Left cardiac atrium (tissue), 4 donors: ENCODE measurements at regions of chr1 and their contacts with region 1.

Region 1: DNA sequence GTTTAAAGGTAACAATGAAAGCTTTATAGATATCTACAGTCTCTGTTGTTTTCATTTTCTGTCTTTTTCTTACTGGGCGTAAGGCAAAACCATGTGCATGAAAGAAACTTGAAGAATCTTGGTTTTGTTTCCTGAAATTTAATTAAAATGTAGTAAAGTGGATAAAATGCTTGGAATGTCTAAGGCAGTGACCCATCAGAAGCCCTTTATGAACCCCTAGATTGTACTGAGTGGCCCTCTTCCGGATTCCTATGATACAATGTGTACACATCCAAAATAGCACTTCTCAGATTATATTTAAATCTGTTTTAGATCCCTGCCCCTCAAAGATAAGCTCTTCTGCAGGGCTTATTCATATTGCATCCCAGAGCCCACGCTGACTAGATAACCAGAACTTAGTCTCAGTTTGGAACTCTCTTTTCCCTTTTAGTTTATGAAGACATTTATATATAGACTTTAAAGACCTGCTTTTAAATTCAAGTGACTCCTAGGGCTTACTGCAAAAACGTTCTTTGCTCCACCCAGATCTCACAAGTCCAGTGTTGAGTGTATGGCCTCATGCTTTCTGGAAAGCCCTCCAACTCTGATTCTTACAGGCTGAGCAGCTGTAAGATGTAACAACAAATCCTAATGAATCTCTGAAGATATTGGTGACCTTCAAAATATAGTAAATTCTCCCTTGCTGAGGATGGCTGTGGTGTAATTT is 142.9 kb downstream of the LRRC7 start:
- DNase-seq: no peak
- ATAC-seq: peak; percentile 60 to 76

Region 2: DNA sequence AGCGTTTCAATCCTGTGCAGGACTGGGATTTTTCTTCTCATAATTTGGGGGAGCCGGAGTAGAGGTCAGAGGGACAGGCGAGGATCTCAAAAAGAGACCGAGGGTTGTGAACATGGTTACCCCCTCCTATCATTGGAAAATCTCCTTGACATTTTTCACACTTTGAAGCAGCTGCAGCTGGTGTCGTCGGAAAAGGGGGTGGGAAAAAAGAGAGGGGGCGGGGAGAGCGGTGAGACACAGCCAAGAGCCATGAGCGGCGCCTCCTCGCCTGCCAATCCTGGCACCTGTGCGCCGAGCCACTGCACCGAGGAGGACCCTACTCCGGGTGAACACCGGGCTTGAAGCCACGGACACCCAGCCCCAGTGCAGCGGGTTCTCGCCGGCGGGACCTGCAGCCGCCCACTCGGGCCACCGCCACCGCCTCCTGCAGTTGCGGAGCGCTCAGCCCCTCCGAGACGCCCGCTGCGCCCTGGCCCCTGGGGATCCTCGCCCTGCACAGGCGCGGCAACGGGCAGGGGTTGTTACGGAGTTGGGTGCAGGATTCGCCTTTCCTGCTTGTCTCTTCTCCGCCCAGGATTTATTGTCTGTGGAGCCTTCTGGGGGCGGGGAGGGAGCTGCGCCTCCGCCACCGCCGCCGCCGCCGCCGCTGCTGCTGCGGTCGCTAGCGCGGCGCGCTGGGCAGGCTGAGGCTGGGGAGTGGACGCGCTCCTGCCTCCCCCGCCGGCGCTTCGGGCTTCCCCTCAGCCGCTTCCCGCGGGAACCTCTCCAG is 142.8 kb before region 1 on chr1 and contains the start of gene LRRC7:
- intact Hi-C with region 1: loop called in 1 of 2 experiments (anchors 10 kb)
- DNase-seq: peak; percentile 31
- ATAC-seq: peak; percentile 67 to 71
- total RNA-seq, gene LRRC7: 5.7 to 6.2 TPM

Region 3: GRCh38 chr1:69657971-69658370 is 52.7 kb before region 1 on chr1:
- intact Hi-C with region 1: no loop called
- DNase-seq: no peak
- ATAC-seq: no peak

Region 4: GRCh38 chr1:69747196-69747595 is 36.6 kb after region 1 on chr1:
- intact Hi-C with region 1: no loop called
- DNase-seq: no peak
- ATAC-seq: no peak

Region 5: DNA sequence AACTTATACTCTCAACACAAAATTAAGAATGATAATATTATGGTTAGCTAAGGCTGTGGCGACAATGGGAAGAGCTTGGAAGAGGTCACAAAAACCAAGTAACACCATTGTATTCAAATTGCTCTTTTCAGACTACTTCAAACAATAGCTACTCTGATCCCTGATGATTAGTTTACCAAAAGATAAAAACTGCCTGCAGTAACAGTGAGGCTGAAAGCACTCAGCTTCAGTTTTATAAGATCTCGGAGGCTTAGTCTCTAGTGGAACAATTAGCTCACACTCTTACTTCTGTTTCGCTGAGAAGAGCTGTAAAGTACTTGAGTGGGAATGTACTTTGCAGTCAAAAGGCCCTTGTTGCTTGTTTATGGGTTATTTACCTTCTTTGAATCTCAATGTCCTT is 135.6 kb after region 1 on chr1:
- intact Hi-C with region 1: no loop called
- DNase-seq: no peak
- ATAC-seq: no peak